ENCODE measurements at regions of chr20 and their contacts with region 1.

Region 1: DNA sequence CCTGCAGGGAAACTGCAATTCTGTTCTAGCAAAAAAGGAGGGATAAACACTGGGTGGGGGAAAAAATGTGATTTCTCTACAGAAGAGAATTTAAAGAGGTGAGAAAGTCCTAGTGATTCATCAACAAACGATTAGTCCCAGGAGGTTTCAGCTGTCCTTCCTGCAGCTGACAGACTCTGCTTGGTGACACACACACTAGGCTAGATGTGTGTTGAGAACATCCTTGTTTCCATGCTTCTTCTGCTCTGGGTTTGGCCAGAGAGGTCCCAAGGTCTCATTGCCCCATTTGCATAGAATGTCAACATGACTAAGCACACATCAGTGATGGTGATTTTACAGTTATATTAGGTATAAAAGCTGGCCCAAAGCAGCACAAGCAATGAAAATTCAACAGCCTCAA is 258.3 kb downstream of the NFATC2 start:
- DNase-seq: no peak
- H3K4me3 ChIP-seq: no peak overlapping the region
- CTCF ChIP-seq: no peak
- POLR2A ChIP-seq: no peak

Region 2: GRCh38 chr20:52751571-52751970 is 1467.4 kb after region 1 on chr20:
- intact Hi-C with region 1: loop called (anchors 5 kb)
- DNase-seq: no peak
- H3K4me3 ChIP-seq: no peak overlapping the region
- CTCF ChIP-seq: no peak
- POLR2A ChIP-seq: no peak

Measured in lower leg skin (tissue), 4 donors.